ENCODE measurements at regions of chr14 and their contacts with region 1.

Region 1: GRCh38 chr14:98138666-98139065 is 1133.3 kb downstream of the BCL11B start:
- DNase-seq: peak; percentile 69 to 81 (median 76)
- H3K4me3 ChIP-seq: peak overlapping the region in 1 of 2 donors; percentile 1
- H3K4me3 Mint-ChIP-seq: peak overlapping the region; percentile 52 to 88 (median 74)
- H3K27ac ChIP-seq: peak overlapping the region; percentile 59
- H3K27ac Mint-ChIP-seq: peak overlapping the region; percentile 84 to 96 (median 92)
- H3K4me1 ChIP-seq: peaks cover 88% of the 10 kb centered on the region
- H3K4me1 Mint-ChIP-seq: peaks cover 59 to 90% (median 77%) of the 10 kb centered on the region in 4 donors
- H3K27me3 ChIP-seq: no peaks in the 10 kb centered on the region
- H3K27me3 Mint-ChIP-seq: no peaks in the 10 kb centered on the region

Region 2: DNA sequence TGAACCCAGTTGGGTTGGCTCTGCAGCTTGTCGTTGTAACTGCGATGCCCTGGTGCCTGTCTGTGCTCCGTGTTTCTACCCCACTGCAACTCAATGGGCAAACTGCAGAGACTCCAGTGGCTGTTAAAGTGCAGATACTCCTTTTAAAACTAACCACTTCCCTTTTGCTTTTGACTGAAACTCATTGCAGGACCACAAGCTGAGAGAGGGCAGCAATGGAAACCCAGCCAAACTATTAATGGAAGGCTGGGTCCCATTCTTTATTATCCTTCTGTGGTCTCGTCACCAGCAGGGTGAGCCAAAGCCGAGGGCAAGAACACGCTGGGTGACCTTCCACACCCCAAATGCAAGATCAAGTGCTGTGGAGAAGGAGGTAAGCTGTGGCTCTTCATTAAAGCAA is 431.1 kb before region 1 on chr14:
- CTCF ChIA-PET with region 1: no interaction called
- POLR2A ChIA-PET with region 1: no interaction called
- intact Hi-C with region 1: loop called (anchors 10 kb)
- DNase-seq: peak; percentile 24 to 36 (median 28)
- H3K4me3 ChIP-seq: no peak overlapping the region
- H3K4me3 Mint-ChIP-seq: peak overlapping the region in 7 of 8 donors; percentile 25 to 88 (median 68)
- H3K27ac ChIP-seq: no peak overlapping the region
- H3K27ac Mint-ChIP-seq: peak overlapping the region; percentile 5 to 85 (median 74)
- H3K4me1 ChIP-seq: peaks cover 84% of the 10 kb centered on the region
- H3K4me1 Mint-ChIP-seq: peaks cover 79 to 100% (median 90%) of the 10 kb centered on the region in 4 donors
- H3K27me3 ChIP-seq: no peaks in the 10 kb centered on the region
- H3K27me3 Mint-ChIP-seq: no peaks in the 10 kb centered on the region

Region 3: GRCh38 chr14:97771340-97772045 is 367.2 kb before region 1 on chr14:
- CTCF ChIA-PET with region 1: no interaction called
- POLR2A ChIA-PET with region 1: no interaction called
- intact Hi-C with region 1: no loop called
- DNase-seq: no peak
- H3K4me3 ChIP-seq: no peak overlapping the region
- H3K4me3 Mint-ChIP-seq: no peak overlapping the region
- H3K27ac ChIP-seq: no peak overlapping the region
- H3K27ac Mint-ChIP-seq: no peak overlapping the region
- H3K4me1 ChIP-seq: no peaks in the 10 kb centered on the region
- H3K4me1 Mint-ChIP-seq: peaks cover 0 to 6% (median under 1%) of the 10 kb centered on the region in 4 donors
- H3K27me3 ChIP-seq: no peaks in the 10 kb centered on the region
- H3K27me3 Mint-ChIP-seq: no peaks in the 10 kb centered on the region

Region 4: DNA sequence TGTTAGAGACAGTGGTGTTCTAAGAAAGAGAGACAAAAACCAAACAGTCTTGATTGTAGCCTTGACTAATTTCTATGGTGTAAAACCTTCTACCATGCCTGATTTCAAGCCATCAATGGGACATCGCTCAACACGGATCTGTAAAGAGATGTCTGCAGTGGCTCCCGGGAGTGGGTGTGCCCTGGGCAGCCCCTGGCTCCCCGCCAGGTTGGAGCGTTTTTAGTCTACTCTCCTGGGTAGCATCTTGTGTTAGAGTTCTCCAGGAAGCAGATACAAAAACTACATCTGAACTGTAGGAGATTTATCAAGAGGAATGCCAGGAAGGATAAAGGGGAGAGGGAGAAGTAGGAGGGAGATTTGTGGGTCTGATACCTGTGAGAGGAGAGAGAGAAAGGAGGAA is 79.6 kb before region 1 on chr14:
- CTCF ChIA-PET with region 1: no interaction called
- POLR2A ChIA-PET with region 1: no interaction called
- intact Hi-C with region 1: no loop called
- DNase-seq: no peak
- H3K4me3 ChIP-seq: no peak overlapping the region
- H3K4me3 Mint-ChIP-seq: no peak overlapping the region
- H3K27ac ChIP-seq: no peak overlapping the region
- H3K27ac Mint-ChIP-seq: peak overlapping the region in 1 of 7 donors; percentile 12
- H3K4me1 ChIP-seq: no peaks in the 10 kb centered on the region
- H3K4me1 Mint-ChIP-seq: peaks cover 0 to 2% (median 0%) of the 10 kb centered on the region in 4 donors
- H3K27me3 ChIP-seq: no peaks in the 10 kb centered on the region
- H3K27me3 Mint-ChIP-seq: no peaks in the 10 kb centered on the region

Region 5: GRCh38 chr14:98182393-98183055 is 43.9 kb after region 1 on chr14:
- CTCF ChIA-PET with region 1: interaction called, 87 read pairs
- POLR2A ChIA-PET with region 1: interaction called, 106 read pairs
- intact Hi-C with region 1: loop called (anchors 5 kb)
- DNase-seq: no peak
- H3K4me3 ChIP-seq: no peak overlapping the region
- H3K4me3 Mint-ChIP-seq: peak overlapping the region in 7 of 8 donors; percentile 44 to 78 (median 72)
- H3K27ac ChIP-seq: peak overlapping the region; percentile 13
- H3K27ac Mint-ChIP-seq: peak overlapping the region; percentile 84 to 98 (median 96)
- H3K4me1 ChIP-seq: peaks cover 97% of the 10 kb centered on the region
- H3K4me1 Mint-ChIP-seq: peaks cover 80 to 98% (median 89%) of the 10 kb centered on the region in 4 donors
- H3K27me3 ChIP-seq: no peaks in the 10 kb centered on the region
- H3K27me3 Mint-ChIP-seq: no peaks in the 10 kb centered on the region

Region 6: DNA sequence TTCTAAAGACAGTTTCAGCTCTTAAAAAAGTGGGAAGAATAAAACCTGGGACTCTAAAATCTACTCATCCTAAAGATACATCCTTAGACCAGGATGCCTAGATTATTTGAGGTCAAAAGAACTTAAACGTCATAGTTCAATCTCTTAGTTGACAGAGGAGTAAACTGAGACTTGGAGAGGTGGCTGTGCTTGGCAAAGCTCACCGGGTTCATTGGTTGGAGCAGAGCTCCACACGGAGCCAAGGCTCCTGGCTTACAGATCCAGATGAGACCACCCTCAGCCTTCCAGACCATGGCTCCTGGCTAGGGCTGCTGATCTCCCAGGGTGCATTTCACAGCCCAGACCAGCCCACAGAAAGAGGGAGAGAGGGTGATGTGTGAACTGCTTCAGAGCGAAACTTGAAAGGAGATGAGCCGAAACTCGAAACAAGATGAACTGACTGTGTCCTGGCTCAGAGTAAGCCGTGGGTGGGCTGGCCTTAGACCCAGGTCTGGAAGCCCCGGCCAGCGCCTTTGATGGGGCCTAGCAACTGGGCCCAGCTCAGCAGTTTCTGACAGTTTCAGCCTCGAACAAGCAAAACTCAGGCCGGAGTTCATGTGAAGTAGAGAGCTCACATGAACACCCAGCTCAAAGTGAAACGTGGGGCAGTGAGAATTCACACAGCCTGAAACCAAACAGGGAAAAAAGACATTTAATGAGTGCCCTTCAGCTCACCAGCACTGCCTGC is 88.5 kb after region 1 on chr14:
- CTCF ChIA-PET with region 1: interaction called, 47 read pairs
- POLR2A ChIA-PET with region 1: interaction called, 16 read pairs
- intact Hi-C with region 1: loop called (anchors 2 kb)
- DNase-seq: peak in 3 of 5 donors; percentile 22 to 24 (median 24)
- H3K4me3 ChIP-seq: peak overlapping the region in 1 of 2 donors; percentile 24
- H3K4me3 Mint-ChIP-seq: peak overlapping the region; percentile 56 to 89 (median 71)
- H3K27ac ChIP-seq: peak overlapping the region; percentile 55
- H3K27ac Mint-ChIP-seq: peak overlapping the region; percentile 89 to 97 (median 90)
- H3K4me1 ChIP-seq: peaks cover 96% of the 10 kb centered on the region
- H3K4me1 Mint-ChIP-seq: peaks cover 67 to 88% (median 77%) of the 10 kb centered on the region in 4 donors
- H3K27me3 ChIP-seq: no peaks in the 10 kb centered on the region
- H3K27me3 Mint-ChIP-seq: no peaks in the 10 kb centered on the region

Region 7: DNA sequence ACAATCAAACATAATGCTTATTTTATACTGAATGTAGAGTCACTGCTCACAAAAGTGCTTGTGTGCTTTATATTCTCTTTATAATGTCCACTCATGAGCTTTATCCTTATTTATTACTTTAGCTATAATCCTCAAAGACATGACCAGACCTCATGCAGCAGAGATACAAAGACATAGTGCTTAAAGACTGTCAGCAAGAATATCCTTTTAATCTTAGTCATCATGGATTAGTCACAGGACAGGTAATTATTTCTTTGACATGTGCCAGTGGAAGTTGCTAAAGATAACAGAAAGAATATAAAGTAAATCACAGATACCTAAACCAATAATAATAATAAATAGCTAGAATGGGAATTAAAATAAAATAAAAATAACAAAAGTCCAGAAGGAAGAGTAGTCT is 425.9 kb after region 1 on chr14:
- CTCF ChIA-PET with region 1: no interaction called
- POLR2A ChIA-PET with region 1: no interaction called
- intact Hi-C with region 1: no loop called
- DNase-seq: no peak
- H3K4me3 ChIP-seq: no peak overlapping the region
- H3K4me3 Mint-ChIP-seq: no peak overlapping the region
- H3K27ac ChIP-seq: no peak overlapping the region
- H3K27ac Mint-ChIP-seq: no peak overlapping the region
- H3K4me1 ChIP-seq: no peaks in the 10 kb centered on the region
- H3K4me1 Mint-ChIP-seq: no peaks in the 10 kb centered on the region
- H3K27me3 ChIP-seq: no peaks in the 10 kb centered on the region
- H3K27me3 Mint-ChIP-seq: no peaks in the 10 kb centered on the region

Region 8: GRCh38 chr14:98912655-98913054 is 774.0 kb after region 1 on chr14:
- CTCF ChIA-PET with region 1: interaction called, 22 read pairs
- POLR2A ChIA-PET with region 1: no interaction called
- intact Hi-C with region 1: no loop called
- DNase-seq: peak in 4 of 5 donors; percentile 34 to 55 (median 52)
- H3K4me3 ChIP-seq: no peak overlapping the region
- H3K4me3 Mint-ChIP-seq: peak overlapping the region in 6 of 8 donors; percentile 5 to 38 (median 16)
- H3K27ac ChIP-seq: no peak overlapping the region
- H3K27ac Mint-ChIP-seq: peak overlapping the region; percentile 10 to 92 (median 77)
- H3K4me1 ChIP-seq: peaks cover 20% of the 10 kb centered on the region
- H3K4me1 Mint-ChIP-seq: peaks cover 24 to 44% (median 31%) of the 10 kb centered on the region in 4 donors
- H3K27me3 ChIP-seq: no peaks in the 10 kb centered on the region
- H3K27me3 Mint-ChIP-seq: peaks cover 0 to 1% of the 10 kb centered on the region in 2 donors

Region 9: DNA sequence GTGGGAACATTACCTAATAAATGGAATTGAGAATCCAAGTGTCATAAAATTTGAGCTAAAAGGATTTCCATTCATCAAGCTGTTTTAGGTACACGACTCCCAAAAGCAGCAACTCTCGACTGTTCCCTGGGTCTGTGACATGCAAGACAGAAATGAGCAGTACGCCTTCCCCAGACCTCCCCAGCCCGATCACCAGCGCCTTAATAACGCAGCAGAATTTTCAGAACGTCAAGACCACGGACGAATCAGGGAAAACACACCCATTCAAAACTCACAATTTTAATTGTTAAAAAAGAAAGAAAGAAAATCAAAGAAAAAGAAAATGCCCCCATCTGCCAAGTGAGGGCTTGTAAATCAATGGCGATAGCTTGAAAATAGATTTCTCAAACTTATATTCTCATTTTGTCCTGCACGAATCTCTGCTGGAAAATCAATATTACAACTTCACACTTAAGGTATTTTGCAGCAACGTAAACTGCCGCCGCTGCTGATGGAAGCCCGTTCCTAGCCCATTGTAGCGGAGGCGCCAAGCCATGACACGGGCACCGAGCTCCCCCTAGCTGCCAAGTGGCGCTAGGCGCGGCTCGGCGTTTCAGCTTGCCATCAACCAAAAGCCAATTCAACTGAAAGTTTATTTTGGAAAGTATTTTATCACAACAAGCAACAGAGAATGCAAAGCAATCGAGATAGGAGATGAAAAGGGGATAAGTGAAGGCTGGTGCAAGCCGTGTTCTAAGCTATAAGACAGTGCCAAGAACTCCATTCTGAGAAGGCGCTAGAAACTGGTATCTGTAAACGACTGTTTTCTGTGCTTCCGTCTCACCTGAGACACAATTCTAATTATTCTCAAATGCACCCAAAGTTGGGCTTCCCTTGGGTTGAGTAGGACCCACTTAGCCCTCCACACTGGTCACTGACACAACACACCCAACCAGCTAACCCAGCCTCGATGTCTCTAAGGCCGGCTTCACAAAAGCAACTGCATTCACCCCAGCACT is 1127.8 kb after region 1 on chr14:
- CTCF ChIA-PET with region 1: interaction called, 100 read pairs
- POLR2A ChIA-PET with region 1: interaction called, 265 read pairs
- intact Hi-C with region 1: loop called (anchors 1 kb)
- DNase-seq: peak; percentile 87 to 90 (median 88)
- H3K4me3 ChIP-seq: peak overlapping the region; percentile 91 to 99
- H3K4me3 Mint-ChIP-seq: peak overlapping the region; percentile 94 to 100 (median 98)
- H3K27ac ChIP-seq: peak overlapping the region; percentile 98
- H3K27ac Mint-ChIP-seq: peak overlapping the region; percentile 99 to 100 (median 100)
- H3K4me1 ChIP-seq: peaks cover 54% of the 10 kb centered on the region
- H3K4me1 Mint-ChIP-seq: peaks cover 42 to 72% (median 55%) of the 10 kb centered on the region in 4 donors
- H3K27me3 ChIP-seq: no peaks in the 10 kb centered on the region
- H3K27me3 Mint-ChIP-seq: no peaks in the 10 kb centered on the region